ENCODE measurements at regions of chr1 and their contacts with region 1.

Region 1: DNA sequence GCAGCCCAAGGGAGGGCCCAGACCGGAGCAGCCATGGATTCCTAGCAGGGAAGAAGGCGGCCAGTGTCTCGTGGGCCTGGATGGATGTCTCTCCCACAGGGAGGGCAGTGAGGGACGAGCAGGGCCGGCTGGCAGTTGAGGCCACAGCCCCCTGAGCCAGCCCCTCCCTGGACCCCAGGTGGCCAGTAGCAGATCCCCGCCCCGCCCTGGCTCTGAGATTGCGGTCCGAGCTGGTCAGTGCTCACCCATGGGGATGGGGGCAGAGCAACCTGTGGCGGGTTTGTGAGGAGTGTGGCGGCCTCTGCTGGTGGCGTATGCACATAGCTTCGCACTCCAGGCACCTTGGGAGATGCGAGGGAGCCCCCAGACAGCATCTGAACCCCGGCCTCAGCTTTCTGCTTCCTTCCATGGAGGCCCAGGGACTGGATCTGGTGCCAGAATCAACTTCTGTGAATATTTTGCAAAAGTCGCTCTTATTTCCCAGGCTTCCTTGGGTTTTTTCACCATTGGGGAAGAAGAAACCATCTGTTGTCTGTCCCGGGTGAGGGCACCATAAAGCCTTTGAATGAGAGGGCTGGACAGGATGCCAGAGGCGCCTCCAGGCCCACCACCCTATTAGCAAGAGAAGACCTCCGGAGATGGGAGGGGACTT is 8.4 kb upstream of the KCNN3 start:
- DNase-seq: peak; percentile 66
- ATAC-seq: peak; percentile 100
- H3K4me3 ChIP-seq: no peak overlapping the region
- H3K27ac ChIP-seq: no peak overlapping the region
- H3K4me1 ChIP-seq: peaks cover 0 to 19% of the 10 kb centered on the region in 2 experiments; a peak in 3 of 4 replicates
- H3K27me3 ChIP-seq: no peaks in the 10 kb centered on the region
- CTCF ChIP-seq: peak; percentile 89
- POLR2A ChIP-seq: no peak
- RAD21 ChIP-seq: peak; percentile 96

Region 2: GRCh38 chr1:154669464-154670282 is 208.8 kb before region 1 on chr1:
- CTCF ChIA-PET with region 1: interaction called, 32 read pairs
- POLR2A ChIA-PET with region 1: interaction called, 5 read pairs
- RAD21 ChIA-PET with region 1: interaction called, 10 to 20 read pairs
- intact Hi-C with region 1: loop called (anchors 1 kb)
- DNase-seq: peak; percentile 67
- ATAC-seq: peak; percentile 100
- H3K4me3 ChIP-seq: no peak overlapping the region
- H3K27ac ChIP-seq: no peak overlapping the region
- H3K4me1 ChIP-seq: peaks cover 0 to 3% of the 10 kb centered on the region in 2 experiments; a peak in 1 of 4 replicates
- H3K27me3 ChIP-seq: no peaks in the 10 kb centered on the region
- CTCF ChIP-seq: peak; percentile 86 to 95 (median 93)
- POLR2A ChIP-seq: no peak
- RAD21 ChIP-seq: peak; percentile 98

Region 3: GRCh38 chr1:154682254-154682653 is 196.2 kb before region 1 on chr1:
- CTCF ChIA-PET with region 1: interaction called, 12 read pairs
- POLR2A ChIA-PET with region 1: no interaction called
- RAD21 ChIA-PET with region 1: no interaction called
- intact Hi-C with region 1: no loop called
- DNase-seq: no peak
- ATAC-seq: peak; percentile 44
- H3K4me3 ChIP-seq: no peak overlapping the region
- H3K27ac ChIP-seq: no peak overlapping the region
- H3K4me1 ChIP-seq: peaks cover 0 to 5% of the 10 kb centered on the region in 2 experiments; a peak in 1 of 4 replicates
- H3K27me3 ChIP-seq: no peaks in the 10 kb centered on the region
- CTCF ChIP-seq: no peak
- POLR2A ChIP-seq: no peak
- RAD21 ChIP-seq: no peak

Region 4: GRCh38 chr1:154765970-154766369 is 112.5 kb before region 1 on chr1:
- CTCF ChIA-PET with region 1: interaction called, 6 read pairs
- POLR2A ChIA-PET with region 1: no interaction called
- RAD21 ChIA-PET with region 1: interaction called in 1 of 2 experiments, 3 read pairs
- intact Hi-C with region 1: loop called (anchors 5 kb)
- DNase-seq: peak; percentile 38
- ATAC-seq: peak; percentile 100
- H3K4me3 ChIP-seq: no peak overlapping the region
- H3K27ac ChIP-seq: no peak overlapping the region
- H3K4me1 ChIP-seq: no peaks in the 10 kb centered on the region
- H3K27me3 ChIP-seq: peaks cover 11% of the 10 kb centered on the region; the same call in 1 of the 2 replicates
- CTCF ChIP-seq: peak; percentile 52 to 75 (median 55); a peak in 5 of 6 replicates
- POLR2A ChIP-seq: no peak
- RAD21 ChIP-seq: peak; percentile 53

Region 5: GRCh38 chr1:154802982-154803920 is 75.2 kb before region 1 on chr1:
- CTCF ChIA-PET with region 1: no interaction called
- POLR2A ChIA-PET with region 1: no interaction called
- RAD21 ChIA-PET with region 1: no interaction called
- intact Hi-C with region 1: no loop called
- DNase-seq: no peak
- ATAC-seq: no peak
- H3K4me3 ChIP-seq: no peak overlapping the region
- H3K27ac ChIP-seq: no peak overlapping the region
- H3K4me1 ChIP-seq: peaks cover 0 to under 1% of the 10 kb centered on the region in 2 experiments; a peak in 1 of 4 replicates
- H3K27me3 ChIP-seq: peaks cover 40% of the 10 kb centered on the region
- CTCF ChIP-seq: no peak
- POLR2A ChIP-seq: no peak
- RAD21 ChIP-seq: no peak

Region 6: GRCh38 chr1:155063550-155064110 is 185.1 kb after region 1 on chr1 and contains the start of gene EFNA4:
- CTCF ChIA-PET with region 1: no interaction called
- POLR2A ChIA-PET with region 1: no interaction called
- RAD21 ChIA-PET with region 1: no interaction called
- intact Hi-C with region 1: loop called (anchors 1 kb)
- DNase-seq: peak; percentile 79
- ATAC-seq: peak; percentile 79
- H3K4me3 ChIP-seq: peak within 1 kb of the TSS; percentile 77 to 84
- H3K27ac ChIP-seq: peak within 1 kb of the TSS; percentile 93
- H3K4me1 ChIP-seq: peaks cover 21 to 35% of the 10 kb centered on the region in 2 experiments
- H3K27me3 ChIP-seq: no peaks in the 10 kb centered on the region
- CTCF ChIP-seq: no peak
- POLR2A ChIP-seq: peak; percentile 76
- RAD21 ChIP-seq: no peak
- total RNA-seq, gene EFNA4: 9.8 TPM